GM12878 (cell line): ENCODE measurements at regions of chr14 and their contacts with region 1.

Region 1: GRCh38 chr14:97336179-97336578 is 539.0 kb downstream of the VRK1 start:
- DNase-seq: no peak
- ATAC-seq: no peak
- H3K4me3 ChIP-seq: no peak overlapping the region
- H3K27ac ChIP-seq: no peak overlapping the region
- H3K4me1 ChIP-seq: peaks cover 23% of the 10 kb centered on the region
- H3K27me3 ChIP-seq: no peaks in the 10 kb centered on the region
- CTCF ChIP-seq: no peak
- EP300 ChIP-seq: no peak
- POLR2A ChIP-seq: no peak
- RAD21 ChIP-seq: no peak

Region 2: DNA sequence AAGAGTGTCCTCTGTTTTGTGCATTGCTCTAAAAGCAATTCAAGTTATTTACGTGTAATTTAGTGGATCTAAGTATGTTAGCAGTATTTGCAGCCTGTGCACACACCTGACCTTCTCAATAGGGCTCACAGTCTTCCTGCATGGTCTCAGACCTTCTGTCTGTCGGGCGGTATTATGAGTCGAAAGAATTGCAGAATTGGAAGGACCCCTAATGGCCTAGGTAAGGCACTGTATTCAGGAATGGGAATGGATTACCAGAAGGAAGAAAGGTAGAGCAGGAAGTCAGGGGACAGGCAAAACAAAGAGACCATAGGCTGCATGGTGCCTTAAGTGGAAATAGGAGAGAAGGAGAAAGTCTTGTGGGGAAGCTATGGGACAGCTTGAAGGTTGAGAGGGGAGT is 197.4 kb before region 1 on chr14:
- CTCF ChIA-PET with region 1: no interaction called
- POLR2A ChIA-PET with region 1: no interaction called
- RAD21 ChIA-PET with region 1: no interaction called
- SMC1A ChIA-PET with region 1: no interaction called
- in situ Hi-C with region 1: no loop called
- intact Hi-C with region 1: no loop called
- DNase-seq: no peak
- ATAC-seq: no peak
- H3K4me3 ChIP-seq: no peak overlapping the region
- H3K27ac ChIP-seq: no peak overlapping the region
- H3K4me1 ChIP-seq: no peaks in the 10 kb centered on the region
- H3K27me3 ChIP-seq: no peaks in the 10 kb centered on the region
- CTCF ChIP-seq: no peak
- EP300 ChIP-seq: no peak
- POLR2A ChIP-seq: no peak
- RAD21 ChIP-seq: peak; percentile 11; the same call in 1 of the 2 replicates

Region 3: GRCh38 chr14:97319691-97320090 is 16.5 kb before region 1 on chr14:
- CTCF ChIA-PET with region 1: interaction called, 4 read pairs
- POLR2A ChIA-PET with region 1: interaction called, 4 read pairs
- RAD21 ChIA-PET with region 1: interaction called, 5 read pairs
- SMC1A ChIA-PET with region 1: interaction called, 26 read pairs
- in situ Hi-C with region 1: no loop called
- intact Hi-C with region 1: no loop called
- DNase-seq: no peak
- ATAC-seq: no peak; the same call in 2 of the 3 replicates
- H3K4me3 ChIP-seq: no peak overlapping the region
- H3K27ac ChIP-seq: no peak overlapping the region
- H3K4me1 ChIP-seq: peaks cover 8% of the 10 kb centered on the region
- H3K27me3 ChIP-seq: no peaks in the 10 kb centered on the region
- CTCF ChIP-seq: no peak
- EP300 ChIP-seq: no peak
- POLR2A ChIP-seq: no peak
- RAD21 ChIP-seq: no peak

Region 4: GRCh38 chr14:97350894-97351731 is 14.9 kb after region 1 on chr14:
- CTCF ChIA-PET with region 1: interaction called, 4 read pairs
- POLR2A ChIA-PET with region 1: no interaction called
- RAD21 ChIA-PET with region 1: interaction called, 7 read pairs
- SMC1A ChIA-PET with region 1: interaction called, 12 read pairs
- in situ Hi-C with region 1: no loop called
- intact Hi-C with region 1: no loop called
- DNase-seq: no peak
- ATAC-seq: peak; percentile 55
- H3K4me3 ChIP-seq: no peak overlapping the region
- H3K27ac ChIP-seq: no peak overlapping the region
- H3K4me1 ChIP-seq: no peaks in the 10 kb centered on the region
- H3K27me3 ChIP-seq: no peaks in the 10 kb centered on the region
- CTCF ChIP-seq: no peak
- EP300 ChIP-seq: no peak
- POLR2A ChIP-seq: no peak
- RAD21 ChIP-seq: no peak

Region 5: DNA sequence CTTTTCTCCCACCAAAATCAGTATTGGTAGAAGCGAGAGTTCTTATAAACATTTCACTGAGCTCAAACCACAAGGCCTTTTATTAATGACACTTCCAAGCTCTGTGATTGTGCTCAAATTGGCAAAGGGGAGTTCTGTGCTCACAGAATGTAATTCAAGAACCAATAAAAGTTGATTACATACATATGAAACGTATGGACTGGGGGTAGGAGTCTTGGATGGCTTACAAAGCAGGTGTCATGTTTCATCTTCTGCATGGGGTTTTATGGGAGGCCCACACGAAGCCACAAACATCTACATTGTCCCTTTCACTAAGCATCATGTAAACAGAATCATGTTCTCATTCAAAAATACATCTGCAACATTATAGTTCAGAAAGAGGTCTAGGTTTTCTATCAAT is 289.3 kb after region 1 on chr14:
- CTCF ChIA-PET with region 1: no interaction called
- POLR2A ChIA-PET with region 1: no interaction called
- RAD21 ChIA-PET with region 1: no interaction called
- SMC1A ChIA-PET with region 1: no interaction called
- in situ Hi-C with region 1: no loop called
- intact Hi-C with region 1: no loop called
- DNase-seq: no peak
- ATAC-seq: no peak; the same call in 2 of the 3 replicates
- H3K4me3 ChIP-seq: no peak overlapping the region
- H3K27ac ChIP-seq: no peak overlapping the region
- H3K4me1 ChIP-seq: no peaks in the 10 kb centered on the region; the same call in 1 of the 2 replicates
- H3K27me3 ChIP-seq: no peaks in the 10 kb centered on the region
- CTCF ChIP-seq: no peak
- EP300 ChIP-seq: no peak
- POLR2A ChIP-seq: no peak
- RAD21 ChIP-seq: no peak